ENCODE measurements at regions of chr12 and their contacts with region 1.

Region 1: DNA sequence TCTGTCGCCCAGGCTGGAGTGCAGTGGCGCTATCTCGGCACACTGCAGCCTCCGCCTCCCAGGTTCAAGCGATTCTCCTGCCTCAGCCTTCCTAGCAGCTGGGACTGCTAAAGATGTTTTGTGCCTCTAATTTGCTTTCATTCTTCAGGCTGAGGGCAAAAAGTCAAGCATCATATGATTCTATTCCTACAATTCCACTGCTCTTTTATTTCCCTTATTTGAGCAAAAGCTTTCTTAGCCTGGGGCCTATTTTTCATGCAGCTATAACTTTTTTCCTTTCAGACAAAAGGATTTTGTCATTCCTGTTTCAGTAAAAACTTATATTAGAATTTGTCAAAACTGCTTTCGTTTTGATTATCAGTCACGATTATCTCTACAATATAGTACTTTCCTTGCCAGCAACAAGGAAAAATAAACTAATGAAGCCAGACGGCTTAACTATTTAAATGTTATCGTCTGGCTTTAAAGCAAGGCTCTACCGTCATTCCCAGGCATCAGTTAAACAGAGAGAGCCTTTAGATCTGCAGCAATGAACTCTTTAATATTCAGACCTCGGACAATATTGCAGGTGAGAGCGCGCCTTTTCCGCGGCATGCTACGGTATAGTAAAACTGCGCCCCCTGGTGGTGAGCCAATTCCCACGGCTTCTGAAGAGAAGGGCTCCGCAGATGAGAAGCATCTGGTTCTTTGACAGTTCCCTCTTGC is 1.4 kb upstream of the SLC2A13 start:
- DNase-seq: peak; percentile 76 to 96 (median 90)
- ATAC-seq: peak; percentile 47
- H3K4me3 ChIP-seq: peak overlapping the region; percentile 49 to 54
- H3K4me3 Mint-ChIP-seq: peak overlapping the region; percentile 92
- H3K27ac ChIP-seq: peak overlapping the region in 1 of 2 experiments; percentile 59
- H3K27ac Mint-ChIP-seq: peak overlapping the region; percentile 73
- H3K4me1 ChIP-seq: peaks cover 19% of the 10 kb centered on the region
- H3K4me1 Mint-ChIP-seq: peaks cover 35% of the 10 kb centered on the region
- H3K27me3 ChIP-seq: no peaks in the 10 kb centered on the region
- H3K27me3 Mint-ChIP-seq: no peaks in the 10 kb centered on the region
- CTCF ChIP-seq: peak; percentile 91

Region 2: DNA sequence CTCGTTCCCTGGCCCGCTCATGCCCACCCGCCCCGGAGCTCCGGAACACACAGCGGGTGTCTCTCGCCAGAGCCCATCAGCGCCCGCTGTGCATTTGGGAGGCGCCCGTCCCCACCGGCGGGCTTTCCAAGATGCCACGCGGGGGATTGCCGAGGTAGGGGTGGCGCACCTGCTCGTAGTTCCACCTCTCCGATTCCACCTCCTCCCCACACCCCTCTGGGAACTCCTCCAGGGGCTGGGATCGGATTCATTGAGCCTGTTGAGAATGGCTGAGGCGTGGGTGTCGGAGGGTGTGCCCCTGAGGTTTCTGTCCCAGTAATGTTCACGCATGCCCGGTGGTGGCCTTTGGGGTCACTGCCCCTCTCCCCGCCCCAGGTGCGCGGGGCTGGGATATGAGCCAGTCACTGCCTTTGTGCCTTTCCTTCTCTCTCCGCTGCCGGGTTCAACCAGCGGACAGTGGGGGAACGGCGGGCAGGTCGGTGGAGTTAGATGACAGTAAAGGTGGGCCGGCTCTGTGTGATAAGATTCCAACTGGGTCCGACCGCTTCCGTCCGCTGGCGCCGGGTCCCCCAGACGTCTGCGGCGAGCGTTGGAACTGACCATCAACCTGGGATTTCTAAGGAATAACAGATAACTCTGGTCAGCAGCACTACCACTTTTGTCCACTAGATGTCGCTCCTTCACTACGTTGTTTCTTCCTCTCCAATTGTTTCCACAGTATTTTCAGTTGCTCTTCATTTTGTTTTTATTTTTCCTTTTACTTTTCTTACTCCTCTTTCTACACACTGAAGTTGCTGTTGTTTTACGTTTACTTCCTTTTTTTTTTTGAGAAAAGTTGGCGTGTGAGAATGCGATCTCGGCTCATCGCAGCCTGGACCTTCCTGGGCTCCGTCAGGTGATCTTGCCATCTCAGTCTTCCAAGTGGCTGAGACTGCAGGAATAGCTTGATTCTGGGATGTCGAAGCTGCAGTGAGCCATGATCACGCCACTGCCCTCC is 1968.7 kb before region 1 on chr12:
- CTCF ChIA-PET with region 1: no interaction called
- POLR2A ChIA-PET with region 1: no interaction called
- intact Hi-C with region 1: loop called in 1 of 2 experiments (anchors 5 kb)
- DNase-seq: peak in 8 of 9 experiments; percentile 19 to 76 (median 62)
- ATAC-seq: peak; percentile 62
- H3K4me3 ChIP-seq: peak overlapping the region; percentile 29 to 36
- H3K4me3 Mint-ChIP-seq: peak overlapping the region; percentile 83
- H3K27ac ChIP-seq: no peak overlapping the region
- H3K27ac Mint-ChIP-seq: peak overlapping the region; percentile 41
- H3K4me1 ChIP-seq: peaks cover 5% of the 10 kb centered on the region
- H3K4me1 Mint-ChIP-seq: peaks cover 10% of the 10 kb centered on the region
- H3K27me3 ChIP-seq: no peaks in the 10 kb centered on the region
- H3K27me3 Mint-ChIP-seq: peaks cover 16% of the 10 kb centered on the region
- CTCF ChIP-seq: peak; percentile 98

Region 3: GRCh38 chr12:39319187-39319586 is 788.1 kb before region 1 on chr12:
- CTCF ChIA-PET with region 1: no interaction called
- POLR2A ChIA-PET with region 1: no interaction called
- intact Hi-C with region 1: loop called (anchors 2 kb)
- DNase-seq: no peak
- ATAC-seq: no peak
- H3K4me3 ChIP-seq: no peak overlapping the region
- H3K4me3 Mint-ChIP-seq: no peak overlapping the region
- H3K27ac ChIP-seq: no peak overlapping the region
- H3K27ac Mint-ChIP-seq: no peak overlapping the region
- H3K4me1 ChIP-seq: no peaks in the 10 kb centered on the region
- H3K4me1 Mint-ChIP-seq: no peaks in the 10 kb centered on the region
- H3K27me3 ChIP-seq: no peaks in the 10 kb centered on the region
- H3K27me3 Mint-ChIP-seq: no peaks in the 10 kb centered on the region
- CTCF ChIP-seq: no peak

Region 4: GRCh38 chr12:39451977-39452376 is 655.3 kb before region 1 on chr12:
- CTCF ChIA-PET with region 1: interaction called, 3 read pairs
- POLR2A ChIA-PET with region 1: no interaction called
- intact Hi-C with region 1: loop called in 1 of 2 experiments (anchors 5 kb)
- DNase-seq: no peak
- ATAC-seq: no peak
- H3K4me3 ChIP-seq: no peak overlapping the region
- H3K4me3 Mint-ChIP-seq: no peak overlapping the region
- H3K27ac ChIP-seq: no peak overlapping the region
- H3K27ac Mint-ChIP-seq: no peak overlapping the region
- H3K4me1 ChIP-seq: no peaks in the 10 kb centered on the region
- H3K4me1 Mint-ChIP-seq: no peaks in the 10 kb centered on the region
- H3K27me3 ChIP-seq: no peaks in the 10 kb centered on the region
- H3K27me3 Mint-ChIP-seq: no peaks in the 10 kb centered on the region
- CTCF ChIP-seq: no peak

Region 5: DNA sequence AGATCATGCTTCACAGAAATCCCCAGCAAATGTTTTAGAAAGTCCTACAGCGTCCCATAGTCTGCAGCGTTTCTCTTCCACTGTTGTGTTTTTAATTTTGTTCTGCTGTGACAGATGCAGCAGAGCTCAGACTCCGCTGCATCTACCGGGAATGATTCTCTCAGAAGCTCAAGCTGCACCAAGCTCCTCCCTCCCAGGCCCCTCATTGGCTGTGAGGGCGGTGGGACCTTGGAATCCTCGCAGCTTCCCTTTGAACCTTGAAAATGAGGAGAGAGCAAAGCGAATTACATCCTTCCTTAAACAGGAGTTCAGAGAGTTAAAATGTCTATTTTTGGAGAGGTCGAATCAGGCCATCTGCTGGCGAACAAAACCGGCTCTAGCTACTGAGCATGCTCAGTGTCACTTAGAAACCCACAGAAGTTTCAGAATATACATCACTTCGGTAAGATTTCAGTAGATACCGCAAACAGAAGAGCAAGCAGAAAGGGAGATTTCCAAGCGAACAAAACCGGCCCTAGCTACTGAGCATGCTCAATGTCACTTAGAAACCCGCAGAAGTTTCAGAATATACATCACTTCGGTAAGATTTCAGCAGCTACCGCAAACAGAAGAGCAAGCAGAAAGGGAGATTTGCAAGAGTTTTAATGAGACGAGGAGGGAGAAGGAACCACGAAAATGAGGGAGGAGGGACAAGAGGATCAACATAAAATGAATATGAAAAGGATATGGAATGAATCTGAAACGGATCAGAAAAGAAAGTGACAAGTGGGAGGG is 487.4 kb before region 1 on chr12 and contains the start of gene ABCD2:
- CTCF ChIA-PET with region 1: no interaction called
- POLR2A ChIA-PET with region 1: interaction called, 5 read pairs
- intact Hi-C with region 1: loop called (anchors 2 to 10 kb)
- DNase-seq: peak; percentile 41 to 95 (median 73)
- ATAC-seq: peak; percentile 80
- H3K4me3 ChIP-seq: peak within 1 kb of the TSS; percentile 62 to 73
- H3K4me3 Mint-ChIP-seq: no peak within 1 kb of the TSS
- H3K27ac ChIP-seq: peak within 1 kb of the TSS; percentile 71 to 81
- H3K27ac Mint-ChIP-seq: no peak within 1 kb of the TSS
- H3K4me1 ChIP-seq: peaks cover 33% of the 10 kb centered on the region
- H3K4me1 Mint-ChIP-seq: peaks cover 42% of the 10 kb centered on the region
- H3K27me3 ChIP-seq: no peaks in the 10 kb centered on the region
- H3K27me3 Mint-ChIP-seq: no peaks in the 10 kb centered on the region
- CTCF ChIP-seq: peak; percentile 17
- total RNA-seq, gene ABCD2: 3.4 to 3.5 TPM

Region 6: GRCh38 chr12:39764944-39765560 is 342.2 kb before region 1 on chr12:
- CTCF ChIA-PET with region 1: no interaction called
- POLR2A ChIA-PET with region 1: no interaction called
- intact Hi-C with region 1: loop called (anchors 1 to 2 kb)
- DNase-seq: peak in 2 of 9 experiments; percentile 19 to 37
- ATAC-seq: no peak
- H3K4me3 ChIP-seq: no peak overlapping the region
- H3K4me3 Mint-ChIP-seq: no peak overlapping the region
- H3K27ac ChIP-seq: no peak overlapping the region
- H3K27ac Mint-ChIP-seq: no peak overlapping the region
- H3K4me1 ChIP-seq: no peaks in the 10 kb centered on the region
- H3K4me1 Mint-ChIP-seq: no peaks in the 10 kb centered on the region
- H3K27me3 ChIP-seq: no peaks in the 10 kb centered on the region
- H3K27me3 Mint-ChIP-seq: no peaks in the 10 kb centered on the region
- CTCF ChIP-seq: peak; percentile 63

Region 7: GRCh38 chr12:40117818-40118217 is 10.6 kb after region 1 on chr12:
- CTCF ChIA-PET with region 1: interaction called, 42 read pairs
- POLR2A ChIA-PET with region 1: interaction called, 4 read pairs
- intact Hi-C with region 1: no loop called
- DNase-seq: no peak
- ATAC-seq: no peak
- H3K4me3 ChIP-seq: no peak overlapping the region
- H3K4me3 Mint-ChIP-seq: no peak overlapping the region
- H3K27ac ChIP-seq: no peak overlapping the region
- H3K27ac Mint-ChIP-seq: no peak overlapping the region
- H3K4me1 ChIP-seq: no peaks in the 10 kb centered on the region
- H3K4me1 Mint-ChIP-seq: no peaks in the 10 kb centered on the region
- H3K27me3 ChIP-seq: no peaks in the 10 kb centered on the region
- H3K27me3 Mint-ChIP-seq: peaks cover 10% of the 10 kb centered on the region
- CTCF ChIP-seq: no peak